ENCODE measurements at regions of chr5 and their contacts with region 1.

Region 1: GRCh38 chr5:141512390-141512910 is 23.6 kb downstream of the PCDHGC5 start:
- DNase-seq: peak; percentile 92 to 95
- ATAC-seq: peak; percentile 45
- H3K4me3 ChIP-seq: peak overlapping the region; percentile 50 to 71
- H3K27ac ChIP-seq: peak overlapping the region; percentile 19 to 43
- H3K4me1 ChIP-seq: peaks cover 2 to 14% of the 10 kb centered on the region in 2 donors
- H3K27me3 ChIP-seq: no peaks in the 10 kb centered on the region

Region 2: GRCh38 chr5:141387233-141387949 is 125.1 kb before region 1 on chr5 and contains the start of gene PCDHGB4:
- intact Hi-C with region 1: no loop called
- DNase-seq: peak in 1 of 2 donors; percentile 74
- ATAC-seq: no peak
- H3K4me3 ChIP-seq: no peak within 1 kb of the TSS
- H3K27ac ChIP-seq: no peak within 1 kb of the TSS
- H3K4me1 ChIP-seq: no peaks in the 10 kb centered on the region
- H3K27me3 ChIP-seq: no peaks in the 10 kb centered on the region
- total RNA-seq, gene PCDHGB4: 7.3 to 10.1 TPM

Region 3: GRCh38 chr5:141475625-141476131 is 36.8 kb before region 1 on chr5 and contains the start of gene PCDHGC3:
- intact Hi-C with region 1: loop called (anchors 2 to 5 kb)
- DNase-seq: peak; percentile 95
- ATAC-seq: peak; percentile 96
- H3K4me3 ChIP-seq: peak within 1 kb of the TSS; percentile 6 to 47
- H3K27ac ChIP-seq: peak within 1 kb of the TSS in 1 of 2 donors; percentile 62
- H3K4me1 ChIP-seq: peaks cover 0 to 9% of the 10 kb centered on the region in 2 donors
- H3K27me3 ChIP-seq: no peaks in the 10 kb centered on the region
- total RNA-seq, gene PCDHGC3: 67.3 to 116 TPM

Region 4: DNA sequence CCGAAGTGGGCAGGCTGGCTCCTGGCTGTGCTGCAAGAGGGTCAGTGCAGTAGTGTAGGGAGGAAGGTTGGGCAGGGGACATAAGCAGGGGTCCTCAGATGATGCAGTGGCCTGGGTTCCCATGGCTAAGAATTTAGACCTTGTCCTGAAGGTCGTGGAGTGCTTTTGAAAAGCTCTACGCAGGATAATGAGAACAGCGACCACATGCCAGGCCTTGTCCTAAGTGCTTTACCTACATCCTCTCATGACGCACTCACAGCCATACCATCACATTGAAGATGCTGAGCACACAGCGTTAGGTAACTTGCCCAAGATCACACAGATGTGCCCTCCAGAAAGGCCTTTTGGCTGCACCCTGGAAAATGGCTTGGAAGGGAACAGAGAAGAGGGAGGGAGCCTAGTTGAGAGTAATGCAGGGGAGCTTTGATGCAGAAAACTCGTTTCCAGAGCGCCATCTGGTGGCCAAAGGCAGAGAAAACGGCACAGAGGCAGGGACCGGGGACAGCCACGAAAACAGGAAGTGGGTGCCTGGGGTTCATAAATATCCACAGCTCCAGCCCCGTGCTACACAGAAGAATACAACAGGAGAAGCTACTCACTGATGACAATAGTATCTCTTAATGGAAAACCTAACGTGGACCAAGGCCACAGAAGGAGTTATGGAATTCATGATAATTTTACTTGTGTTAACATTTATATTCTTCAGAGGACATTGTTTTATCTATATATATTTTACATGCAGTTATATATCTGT is 448.2 kb after region 1 on chr5:
- intact Hi-C with region 1: no loop called
- DNase-seq: peak; percentile 95
- ATAC-seq: peak; percentile 89
- H3K4me3 ChIP-seq: no peak overlapping the region
- H3K27ac ChIP-seq: no peak overlapping the region
- H3K4me1 ChIP-seq: no peaks in the 10 kb centered on the region
- H3K27me3 ChIP-seq: no peaks in the 10 kb centered on the region

Measured in aorta (tissue), 5 donors.